ENCODE measurements at regions of chr19 and their contacts with region 1.

Region 1: GRCh38 chr19:11558881-11559828 is at the start of gene ELOF1:
- DNase-seq: peak; percentile 94 to 97 (median 96)
- H3K4me3 ChIP-seq: peak within 1 kb of the TSS; percentile 85
- H3K4me3 Mint-ChIP-seq: peak within 1 kb of the TSS; percentile 92 to 99 (median 97)
- H3K27ac ChIP-seq: peak within 1 kb of the TSS; percentile 75
- H3K27ac Mint-ChIP-seq: peak within 1 kb of the TSS; percentile 84 to 99 (median 95)
- H3K4me1 ChIP-seq: peaks cover 30% of the 10 kb centered on the region
- H3K4me1 Mint-ChIP-seq: peaks cover 35 to 50% (median 36%) of the 10 kb centered on the region in 3 donors
- H3K27me3 ChIP-seq: no peaks in the 10 kb centered on the region
- H3K27me3 Mint-ChIP-seq: peaks cover 0 to 3% of the 10 kb centered on the region in 2 donors
- total RNA-seq, gene ELOF1: 61.7 to 62.7 TPM

Region 2: GRCh38 chr19:9834726-9835506 is 1724.2 kb before region 1 on chr19 and contains the start of gene PIN1:
- CTCF ChIA-PET with region 1: no interaction called
- POLR2A ChIA-PET with region 1: interaction called, 10 read pairs
- DNase-seq: peak; percentile 99 to 100 (median 99)
- H3K4me3 ChIP-seq: peak within 1 kb of the TSS; percentile 83
- H3K4me3 Mint-ChIP-seq: peak within 1 kb of the TSS; percentile 94 to 96 (median 96)
- H3K27ac ChIP-seq: peak within 1 kb of the TSS; percentile 78
- H3K27ac Mint-ChIP-seq: peak within 1 kb of the TSS; percentile 92 to 98 (median 96)
- H3K4me1 ChIP-seq: peaks cover 15% of the 10 kb centered on the region
- H3K4me1 Mint-ChIP-seq: peaks cover 16 to 41% (median 17%) of the 10 kb centered on the region in 3 donors
- H3K27me3 ChIP-seq: no peaks in the 10 kb centered on the region
- H3K27me3 Mint-ChIP-seq: no peaks in the 10 kb centered on the region
- total RNA-seq, gene PIN1: 103 to 110 TPM

Region 3: GRCh38 chr19:11460207-11460606 is 98.9 kb before region 1 on chr19:
- CTCF ChIA-PET with region 1: no interaction called
- POLR2A ChIA-PET with region 1: no interaction called
- DNase-seq: no peak
- H3K4me3 ChIP-seq: no peak overlapping the region
- H3K4me3 Mint-ChIP-seq: no peak overlapping the region
- H3K27ac ChIP-seq: no peak overlapping the region
- H3K27ac Mint-ChIP-seq: no peak overlapping the region
- H3K4me1 ChIP-seq: no peaks in the 10 kb centered on the region
- H3K4me1 Mint-ChIP-seq: peaks cover 0 to 3% (median 0%) of the 10 kb centered on the region in 3 donors
- H3K27me3 ChIP-seq: no peaks in the 10 kb centered on the region
- H3K27me3 Mint-ChIP-seq: peaks cover 6 to 18% of the 10 kb centered on the region in 2 donors

Region 4: DNA sequence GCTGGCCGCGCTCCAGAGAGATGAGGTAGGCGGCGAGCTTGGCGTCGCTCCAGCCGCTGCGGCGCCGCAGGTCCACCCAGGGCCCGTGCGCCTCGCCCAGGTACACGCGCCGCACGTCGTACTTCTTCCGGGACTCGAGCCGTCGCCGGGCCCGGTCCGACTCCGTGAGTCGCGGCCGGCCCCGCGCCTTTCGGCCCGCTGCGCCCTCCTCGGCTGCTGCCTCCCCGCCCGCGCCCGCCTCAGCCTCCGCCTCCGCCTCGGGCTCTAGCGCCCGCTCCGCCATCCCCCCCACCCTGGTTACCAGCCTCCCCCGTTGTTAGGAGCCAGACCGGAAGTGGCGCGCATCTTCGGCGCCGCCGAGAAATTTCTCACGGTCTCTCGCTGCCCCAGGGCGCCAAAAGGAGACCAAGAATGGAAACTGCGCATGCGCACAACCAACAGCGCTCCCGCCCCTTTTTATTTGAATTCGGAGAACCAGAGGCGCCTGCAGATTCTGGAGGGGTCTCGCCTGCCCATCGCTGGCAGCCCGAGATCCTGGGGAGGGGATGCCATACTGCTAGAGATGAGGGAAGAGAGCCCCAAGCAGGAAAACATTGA is 53.6 kb before region 1 on chr19 and contains the start of gene ZNF653:
- CTCF ChIA-PET with region 1: no interaction called
- POLR2A ChIA-PET with region 1: no interaction called
- DNase-seq: peak; percentile 90 to 97 (median 94)
- H3K4me3 ChIP-seq: peak within 1 kb of the TSS; percentile 71
- H3K4me3 Mint-ChIP-seq: peak within 1 kb of the TSS; percentile 86 to 99 (median 90)
- H3K27ac ChIP-seq: peak within 1 kb of the TSS; percentile 96
- H3K27ac Mint-ChIP-seq: peak within 1 kb of the TSS; percentile 93 to 100 (median 94)
- H3K4me1 ChIP-seq: peaks cover 11% of the 10 kb centered on the region
- H3K4me1 Mint-ChIP-seq: peaks cover 13 to 18% (median 14%) of the 10 kb centered on the region in 3 donors
- H3K27me3 ChIP-seq: no peaks in the 10 kb centered on the region
- H3K27me3 Mint-ChIP-seq: no peaks in the 10 kb centered on the region
- total RNA-seq, gene ZNF653: 12.6 to 13.3 TPM

Region 5: DNA sequence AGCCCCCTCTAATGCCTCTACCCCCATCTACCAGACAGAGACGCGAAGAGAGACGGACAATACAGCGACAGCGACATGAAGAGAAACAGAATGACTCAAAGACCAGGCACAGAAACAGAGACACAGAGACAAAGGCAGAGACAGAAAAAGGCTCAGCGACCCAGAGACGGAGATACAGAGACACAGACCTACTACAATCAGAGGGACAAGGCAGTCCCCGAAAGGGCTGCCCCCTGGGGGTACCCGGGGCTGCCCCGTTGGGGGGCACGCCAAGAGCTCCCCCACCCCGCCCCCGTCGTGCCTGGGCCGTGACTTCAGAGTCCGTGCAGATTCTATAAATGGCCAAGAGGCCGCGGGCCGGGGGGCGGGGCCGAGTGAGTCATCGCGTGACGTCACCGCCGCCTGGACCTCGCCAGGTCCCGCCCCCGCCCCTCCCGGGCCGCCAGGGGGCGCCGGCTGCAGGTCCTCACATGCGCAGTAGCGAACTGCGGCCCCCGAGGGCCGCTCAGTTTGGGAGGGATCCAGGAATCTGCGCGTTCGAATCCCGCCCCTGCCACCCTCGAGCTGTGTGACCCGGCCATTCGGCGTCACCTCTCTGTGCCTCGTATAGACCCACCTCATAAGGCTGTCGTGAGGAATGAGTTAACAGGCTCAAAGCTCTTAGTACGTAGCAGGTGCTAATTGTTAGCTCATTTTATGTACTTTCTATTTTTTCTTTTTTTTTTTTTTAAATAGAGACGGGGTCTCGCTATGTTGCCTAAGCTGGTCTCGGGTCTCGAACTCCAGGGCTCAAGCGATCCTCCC is 23.2 kb before region 1 on chr19:
- CTCF ChIA-PET with region 1: interaction called, 14 read pairs
- POLR2A ChIA-PET with region 1: interaction called, 5 read pairs
- DNase-seq: peak; percentile 73 to 86 (median 83)
- H3K4me3 ChIP-seq: peak overlapping the region; percentile 49
- H3K4me3 Mint-ChIP-seq: peak overlapping the region; percentile 53 to 81 (median 70)
- H3K27ac ChIP-seq: peak overlapping the region; percentile 67
- H3K27ac Mint-ChIP-seq: peak overlapping the region; percentile 66 to 91 (median 81)
- H3K4me1 ChIP-seq: peaks cover 14% of the 10 kb centered on the region
- H3K4me1 Mint-ChIP-seq: peaks cover 10 to 16% (median 14%) of the 10 kb centered on the region in 3 donors
- H3K27me3 ChIP-seq: peaks cover 5% of the 10 kb centered on the region
- H3K27me3 Mint-ChIP-seq: peaks cover 11 to 12% of the 10 kb centered on the region in 2 donors

Region 6: DNA sequence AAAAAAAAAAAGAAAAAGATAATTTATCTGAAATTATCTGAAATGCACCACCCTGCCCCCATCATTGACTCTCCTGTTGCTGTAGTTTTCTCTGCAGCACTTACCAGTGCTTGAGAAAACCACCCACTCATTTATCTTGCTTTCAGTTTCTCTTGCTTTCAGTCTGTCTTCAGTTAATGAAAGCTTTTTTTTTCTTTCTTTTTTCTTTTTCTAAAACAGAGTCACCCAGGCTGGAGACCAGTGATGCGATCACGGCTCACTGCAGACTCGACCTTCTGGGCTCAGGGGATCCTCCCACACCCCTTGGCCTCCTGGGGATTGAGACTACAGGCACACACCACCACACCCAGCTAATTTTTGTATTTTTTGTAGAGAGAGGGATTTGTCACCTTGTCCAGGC is 22.6 kb after region 1 on chr19:
- CTCF ChIA-PET with region 1: interaction called, 14 read pairs
- POLR2A ChIA-PET with region 1: interaction called, 7 read pairs
- DNase-seq: peak in 2 of 5 donors; percentile 24 to 56
- H3K4me3 ChIP-seq: peak overlapping the region; percentile 7
- H3K4me3 Mint-ChIP-seq: peak overlapping the region; percentile 57 to 83 (median 74)
- H3K27ac ChIP-seq: peak overlapping the region; percentile 51
- H3K27ac Mint-ChIP-seq: peak overlapping the region; percentile 46 to 98 (median 84)
- H3K4me1 ChIP-seq: peaks cover 47% of the 10 kb centered on the region
- H3K4me1 Mint-ChIP-seq: peaks cover 18 to 38% (median 22%) of the 10 kb centered on the region in 3 donors
- H3K27me3 ChIP-seq: no peaks in the 10 kb centered on the region
- H3K27me3 Mint-ChIP-seq: no peaks in the 10 kb centered on the region